Aorta (tissue), 5 donors: ENCODE measurements at regions of chr5 and their contacts with region 1.

Region 1: DNA sequence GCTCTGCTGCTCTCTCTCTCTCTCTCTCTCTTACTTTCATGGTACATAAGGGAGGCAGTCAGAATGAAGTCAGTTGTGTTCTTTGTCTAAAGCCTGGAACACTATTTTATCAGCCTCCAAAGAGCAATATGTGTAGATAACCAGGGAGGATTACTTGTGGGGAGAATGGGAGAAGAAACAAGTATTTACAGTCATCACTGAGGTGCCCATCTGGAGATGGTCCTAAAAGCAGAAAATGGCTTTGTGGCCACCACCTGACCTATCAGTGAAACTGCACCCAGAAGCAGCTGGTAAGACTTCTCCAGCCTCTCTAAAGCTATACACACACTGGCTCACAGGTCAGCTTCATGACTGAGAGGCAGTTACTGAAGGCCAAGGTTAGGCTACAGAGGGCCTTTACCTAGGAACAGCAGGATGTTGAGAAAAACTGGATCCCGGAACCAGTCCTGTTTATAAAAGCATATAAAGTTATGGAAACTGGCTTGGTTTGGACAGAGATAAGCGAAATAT is 75.1 kb downstream of the MRPS27 start:
- DNase-seq: no peak
- ATAC-seq: peak; percentile 58
- H3K4me3 ChIP-seq: no peak overlapping the region
- H3K27ac ChIP-seq: peak overlapping the region; percentile 95 to 98
- H3K4me1 ChIP-seq: peaks cover 9 to 19% of the 10 kb centered on the region in 2 donors
- H3K27me3 ChIP-seq: no peaks in the 10 kb centered on the region

Region 2: DNA sequence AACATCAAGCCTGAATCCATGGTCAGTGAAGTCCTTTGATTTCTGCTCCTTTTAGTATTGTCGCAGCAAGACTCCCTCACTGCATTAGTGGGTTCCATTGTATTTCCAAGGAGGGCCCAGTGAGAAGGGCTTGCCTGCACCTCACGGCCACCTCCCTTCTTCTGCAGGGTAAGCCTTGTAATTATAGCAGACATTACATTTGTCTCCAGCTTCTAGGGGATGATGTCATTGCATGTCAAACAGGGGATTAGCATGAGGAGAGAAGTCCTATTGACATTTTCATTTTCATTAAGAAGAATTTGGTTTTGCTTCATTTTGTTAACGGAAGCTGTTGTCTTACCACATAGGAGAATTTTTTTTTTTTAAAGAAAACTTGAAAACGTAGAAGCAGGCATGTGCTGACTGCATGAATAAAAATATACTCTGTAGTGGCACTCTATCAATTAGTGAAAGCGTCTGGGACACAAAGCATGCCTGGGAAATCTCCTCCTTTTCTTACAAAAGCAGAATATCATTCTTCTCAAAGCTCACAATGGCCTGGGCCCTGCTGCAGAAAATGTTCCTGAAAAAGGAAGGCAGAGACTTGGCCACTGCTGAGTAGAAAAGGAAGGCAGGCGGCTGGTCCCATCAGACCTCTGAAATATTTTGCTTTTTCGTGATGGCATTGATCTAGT is 110.6 kb before region 1 on chr5:
- intact Hi-C with region 1: no loop called
- DNase-seq: no peak
- ATAC-seq: no peak
- H3K4me3 ChIP-seq: no peak overlapping the region
- H3K27ac ChIP-seq: peak overlapping the region; percentile 92 to 95
- H3K4me1 ChIP-seq: peaks cover 3 to 24% of the 10 kb centered on the region in 2 donors
- H3K27me3 ChIP-seq: no peaks in the 10 kb centered on the region

Region 3: DNA sequence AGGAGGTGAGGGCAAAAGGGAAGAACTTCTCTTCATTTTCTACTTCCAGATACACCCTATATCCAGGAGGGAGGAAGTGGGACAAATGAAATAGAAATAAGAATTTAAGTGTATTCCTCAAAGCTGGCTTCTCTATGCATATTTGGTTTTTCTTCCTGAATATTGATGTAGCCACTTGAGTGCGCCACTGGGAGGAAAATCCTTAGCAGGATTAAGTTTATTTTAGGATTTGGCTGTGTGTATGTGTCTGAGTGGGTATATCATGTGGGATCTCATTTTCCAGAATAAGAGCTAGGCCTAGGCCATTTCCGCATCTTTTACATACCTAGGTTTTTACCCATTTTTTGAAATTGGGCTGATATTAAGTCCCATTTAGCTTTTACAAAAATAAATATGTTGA is 95.2 kb before region 1 on chr5:
- intact Hi-C with region 1: loop called in 1 of 2 experiments (anchors 5 kb)
- DNase-seq: no peak
- ATAC-seq: no peak
- H3K4me3 ChIP-seq: no peak overlapping the region
- H3K27ac ChIP-seq: peak overlapping the region; percentile 87 to 99
- H3K4me1 ChIP-seq: peaks cover 20 to 36% of the 10 kb centered on the region in 2 donors
- H3K27me3 ChIP-seq: no peaks in the 10 kb centered on the region

Region 4: GRCh38 chr5:72194846-72195245 is 50.1 kb before region 1 on chr5:
- intact Hi-C with region 1: loop called in 1 of 2 experiments (anchors 5 kb)
- DNase-seq: no peak
- ATAC-seq: no peak
- H3K4me3 ChIP-seq: no peak overlapping the region
- H3K27ac ChIP-seq: no peak overlapping the region
- H3K4me1 ChIP-seq: peaks cover 0 to 7% of the 10 kb centered on the region in 2 donors
- H3K27me3 ChIP-seq: no peaks in the 10 kb centered on the region

Region 5: DNA sequence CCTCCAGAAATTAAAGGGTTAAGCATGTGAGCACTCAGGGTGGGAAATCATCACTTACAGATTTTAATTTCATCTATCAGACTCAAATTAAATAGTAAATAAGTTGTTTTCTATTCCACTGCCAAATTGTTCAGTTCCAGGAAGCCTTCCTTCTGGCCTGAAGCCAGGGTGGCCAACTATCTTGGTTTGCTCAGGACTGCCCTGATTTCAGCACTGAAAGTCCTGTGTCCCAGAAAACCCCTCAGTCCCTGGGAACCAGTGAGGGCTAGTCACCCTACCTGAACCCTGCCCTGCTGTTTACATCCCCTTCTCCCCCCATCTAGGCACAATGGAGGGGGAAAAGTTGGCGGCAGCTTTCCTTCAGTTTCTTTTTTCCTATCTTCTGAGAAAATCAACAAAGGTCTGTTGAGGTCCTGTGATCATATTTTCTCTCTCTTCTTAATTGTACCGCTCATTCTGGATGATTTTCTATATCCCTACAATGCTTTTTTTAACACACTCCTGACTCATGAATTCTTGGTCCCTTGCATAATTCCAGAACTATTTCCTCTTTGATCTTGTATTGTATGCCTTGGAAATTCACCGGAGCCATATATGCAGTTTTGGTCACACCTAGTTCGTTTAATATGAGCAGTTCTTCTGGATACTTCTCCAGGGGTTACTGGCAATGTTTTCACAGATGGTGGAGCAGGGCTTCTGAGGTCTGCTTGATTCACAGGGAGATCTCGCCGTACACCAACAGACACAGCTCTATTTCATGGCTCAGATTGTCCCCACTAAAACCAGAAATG is 33.8 kb before region 1 on chr5:
- intact Hi-C with region 1: loop called in 1 of 2 experiments (anchors 5 kb)
- DNase-seq: peak; percentile 70 to 82
- ATAC-seq: peak; percentile 81
- H3K4me3 ChIP-seq: no peak overlapping the region
- H3K27ac ChIP-seq: peak overlapping the region; percentile 14 to 97
- H3K4me1 ChIP-seq: peaks cover 3 to 7% of the 10 kb centered on the region in 2 donors
- H3K27me3 ChIP-seq: no peaks in the 10 kb centered on the region

Region 6: GRCh38 chr5:72301557-72301956 is 56.6 kb after region 1 on chr5:
- intact Hi-C with region 1: loop called (anchors 5 kb)
- DNase-seq: no peak
- ATAC-seq: no peak
- H3K4me3 ChIP-seq: no peak overlapping the region
- H3K27ac ChIP-seq: no peak overlapping the region
- H3K4me1 ChIP-seq: peaks cover 2 to 8% of the 10 kb centered on the region in 2 donors
- H3K27me3 ChIP-seq: no peaks in the 10 kb centered on the region